MCF 10A (cell line): ENCODE measurements at regions of chr7 and their contacts with region 1.

Region 1: DNA sequence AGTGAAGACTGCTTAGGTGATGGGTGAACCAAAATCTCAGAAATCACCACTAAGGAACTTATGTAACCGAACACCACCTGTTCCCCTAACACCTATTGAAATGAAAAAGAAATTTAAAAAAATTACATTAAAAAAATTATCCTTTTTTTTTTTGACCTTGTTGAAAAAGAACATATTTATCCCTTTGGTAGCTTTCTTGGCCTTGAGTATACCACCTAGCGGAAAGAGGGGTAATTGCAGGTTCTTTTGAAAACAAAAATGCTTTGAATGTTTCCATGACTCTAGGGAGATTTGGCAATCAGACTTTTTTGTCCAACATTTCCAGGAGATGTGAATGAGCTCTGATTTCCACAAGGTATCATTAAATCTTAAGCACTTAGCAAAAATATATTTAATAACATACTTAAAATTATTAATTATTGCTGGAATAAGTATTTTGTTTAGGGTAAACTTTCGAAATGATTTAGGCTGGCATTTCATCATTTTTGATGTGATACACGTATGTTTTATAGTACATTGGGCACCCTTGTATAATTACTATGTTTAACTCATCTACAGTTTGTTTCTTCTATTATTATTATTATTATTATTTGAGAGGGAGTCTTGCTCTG is 47.0 kb upstream of the ELMO1 start:
- DNase-seq: peak; percentile 59
- H3K4me3 Mint-ChIP-seq: no peak overlapping the region
- H3K27ac Mint-ChIP-seq: peak overlapping the region; percentile 27
- H3K4me1 Mint-ChIP-seq: no peaks in the 10 kb centered on the region
- H3K27me3 Mint-ChIP-seq: no peaks in the 10 kb centered on the region
- CTCF ChIP-seq: peak; percentile 56

Region 2: DNA sequence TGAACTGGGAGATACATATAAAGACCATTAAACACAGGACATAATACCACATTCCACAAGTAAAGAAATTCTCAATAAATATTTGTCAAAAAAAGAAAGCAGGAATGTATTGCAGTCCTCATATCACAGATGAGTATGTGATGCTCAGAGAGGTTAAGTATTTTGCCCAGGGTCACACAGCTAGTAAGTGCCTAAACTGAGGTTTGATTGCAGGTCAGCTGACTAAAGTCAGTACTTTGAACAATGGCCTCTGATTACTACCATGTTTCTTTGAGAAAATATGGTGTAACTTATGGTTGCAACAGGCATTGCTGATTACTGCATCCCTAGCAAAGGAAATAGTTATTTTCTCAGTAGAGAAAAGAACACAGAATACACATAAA is 314.1 kb before region 1 on chr7:
- CTCF ChIA-PET with region 1: no interaction called
- POLR2A ChIA-PET with region 1: no interaction called
- intact Hi-C with region 1: no loop called
- DNase-seq: no peak
- H3K4me3 Mint-ChIP-seq: no peak overlapping the region
- H3K27ac Mint-ChIP-seq: no peak overlapping the region
- H3K4me1 Mint-ChIP-seq: no peaks in the 10 kb centered on the region
- H3K27me3 Mint-ChIP-seq: peaks cover 10% of the 10 kb centered on the region
- CTCF ChIP-seq: no peak

Region 3: DNA sequence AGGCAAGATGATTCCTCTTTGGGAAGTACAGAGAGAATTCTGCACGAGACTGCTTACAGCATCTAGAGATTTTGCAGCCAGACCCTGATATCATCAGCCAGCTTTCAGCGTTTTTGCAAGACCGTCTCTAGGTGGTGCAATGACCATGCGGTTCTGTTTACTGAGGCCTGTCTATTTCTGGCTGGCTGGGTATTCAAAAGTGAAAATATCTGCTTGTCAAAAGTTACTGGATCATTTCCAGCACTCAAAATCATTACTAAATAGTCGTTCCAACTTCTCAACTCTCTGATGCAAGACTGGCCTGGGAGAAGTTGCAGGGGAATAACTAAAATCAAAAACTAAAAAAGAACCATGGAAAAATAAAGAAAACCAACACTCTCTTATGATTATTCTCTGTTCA is 287.2 kb before region 1 on chr7:
- CTCF ChIA-PET with region 1: interaction called, 15 read pairs
- POLR2A ChIA-PET with region 1: no interaction called
- intact Hi-C with region 1: loop called (anchors 1 kb)
- DNase-seq: peak; percentile 87
- H3K4me3 Mint-ChIP-seq: no peak overlapping the region
- H3K27ac Mint-ChIP-seq: no peak overlapping the region
- H3K4me1 Mint-ChIP-seq: peaks cover 16% of the 10 kb centered on the region
- H3K27me3 Mint-ChIP-seq: no peaks in the 10 kb centered on the region
- CTCF ChIP-seq: peak; percentile 49

Region 4: DNA sequence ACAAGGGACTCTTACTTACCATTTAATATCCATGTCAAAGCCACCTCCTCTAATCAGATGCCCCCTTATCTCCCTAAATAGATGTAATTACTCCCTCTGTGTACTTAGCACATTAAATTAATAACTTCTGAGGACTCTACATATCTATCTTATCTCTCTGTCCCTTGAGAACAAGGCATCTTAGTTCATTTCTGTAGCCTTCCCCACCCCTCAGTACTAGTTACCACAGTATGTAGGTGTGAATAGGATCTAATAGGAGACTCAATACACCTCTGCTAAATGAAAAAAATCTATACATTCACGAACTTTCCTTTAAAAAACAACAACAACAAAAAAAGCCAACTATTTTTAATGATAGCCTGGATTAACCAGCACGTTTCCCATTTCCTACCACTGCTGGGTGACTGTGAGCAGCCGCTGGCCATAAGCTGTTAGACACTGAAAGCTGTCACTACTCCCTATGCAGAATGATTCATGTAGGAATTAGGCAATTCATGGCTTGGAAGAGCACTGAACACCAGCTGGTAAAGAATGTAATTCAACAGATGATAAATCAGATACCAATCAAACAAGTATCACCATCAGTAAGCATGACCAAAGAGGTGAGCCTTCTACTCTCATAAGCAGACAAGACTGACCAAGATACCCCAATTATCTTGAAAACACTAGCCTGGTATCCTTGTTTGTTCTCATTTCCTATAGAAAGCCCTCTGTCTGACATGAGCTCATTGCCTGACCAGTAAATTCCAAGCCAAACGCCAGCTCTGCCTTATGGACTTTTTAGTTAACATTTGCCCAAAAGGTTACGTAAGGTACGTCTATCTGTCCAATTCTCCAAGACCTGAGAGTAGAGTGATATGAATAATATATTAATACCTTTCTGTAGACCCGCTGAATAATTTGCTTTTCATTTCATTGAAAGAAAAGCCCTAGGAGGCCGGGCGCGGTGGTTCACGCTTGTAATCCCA is 174.9 kb before region 1 on chr7:
- CTCF ChIA-PET with region 1: interaction called, 5 read pairs
- POLR2A ChIA-PET with region 1: no interaction called
- intact Hi-C with region 1: loop called (anchors 1 kb)
- DNase-seq: peak; percentile 81
- H3K4me3 Mint-ChIP-seq: no peak overlapping the region
- H3K27ac Mint-ChIP-seq: no peak overlapping the region
- H3K4me1 Mint-ChIP-seq: peaks cover 7% of the 10 kb centered on the region
- H3K27me3 Mint-ChIP-seq: no peaks in the 10 kb centered on the region
- CTCF ChIP-seq: no peak

Region 5: GRCh38 chr7:37433166-37433565 is 62.5 kb before region 1 on chr7:
- CTCF ChIA-PET with region 1: no interaction called
- POLR2A ChIA-PET with region 1: no interaction called
- intact Hi-C with region 1: loop called (anchors 2 kb)
- DNase-seq: peak; percentile 12
- H3K4me3 Mint-ChIP-seq: no peak overlapping the region
- H3K27ac Mint-ChIP-seq: no peak overlapping the region
- H3K4me1 Mint-ChIP-seq: no peaks in the 10 kb centered on the region
- H3K27me3 Mint-ChIP-seq: no peaks in the 10 kb centered on the region
- CTCF ChIP-seq: peak; percentile 11

Region 6: GRCh38 chr7:37510043-37510634 is 14.5 kb after region 1 on chr7:
- CTCF ChIA-PET with region 1: interaction called, 71 read pairs
- POLR2A ChIA-PET with region 1: interaction called, 5 read pairs
- intact Hi-C with region 1: no loop called
- DNase-seq: peak; percentile 51
- H3K4me3 Mint-ChIP-seq: no peak overlapping the region
- H3K27ac Mint-ChIP-seq: no peak overlapping the region
- H3K4me1 Mint-ChIP-seq: no peaks in the 10 kb centered on the region
- H3K27me3 Mint-ChIP-seq: no peaks in the 10 kb centered on the region
- CTCF ChIP-seq: peak; percentile 63

Region 7: GRCh38 chr7:37516610-37517108 is 21.0 kb after region 1 on chr7:
- CTCF ChIA-PET with region 1: interaction called, 11 read pairs
- POLR2A ChIA-PET with region 1: no interaction called
- intact Hi-C with region 1: no loop called
- DNase-seq: no peak
- H3K4me3 Mint-ChIP-seq: no peak overlapping the region
- H3K27ac Mint-ChIP-seq: no peak overlapping the region
- H3K4me1 Mint-ChIP-seq: peaks cover 6% of the 10 kb centered on the region
- H3K27me3 Mint-ChIP-seq: no peaks in the 10 kb centered on the region
- CTCF ChIP-seq: no peak

Region 8: GRCh38 chr7:37592366-37592765 is 96.7 kb after region 1 on chr7:
- CTCF ChIA-PET with region 1: no interaction called
- POLR2A ChIA-PET with region 1: no interaction called
- intact Hi-C with region 1: no loop called
- DNase-seq: no peak
- H3K4me3 Mint-ChIP-seq: no peak overlapping the region
- H3K27ac Mint-ChIP-seq: no peak overlapping the region
- H3K4me1 Mint-ChIP-seq: no peaks in the 10 kb centered on the region
- H3K27me3 Mint-ChIP-seq: no peaks in the 10 kb centered on the region
- CTCF ChIP-seq: no peak